Transverse colon (tissue), 4 donors: ENCODE measurements at regions of chr6 and their contacts with region 1.

Region 1: GRCh38 chr6:1609648-1610496 is at the start of gene FOXC1:
- DNase-seq: peak; percentile 79
- H3K4me3 ChIP-seq: peak within 1 kb of the TSS; percentile 33 to 66 (median 48)
- H3K27ac ChIP-seq: peak within 1 kb of the TSS; percentile 62 to 71 (median 69)
- H3K4me1 ChIP-seq: peaks cover 10 to 61% (median 48%) of the 10 kb centered on the region in 4 donors
- H3K27me3 ChIP-seq: peaks cover 92% of the 10 kb centered on the region
- CTCF ChIP-seq: no peak
- EP300 ChIP-seq: no peak
- POLR2A ChIP-seq: no peak
- total RNA-seq, gene FOXC1: 0.75 to 0.96 (median 0.79) TPM

Region 2: GRCh38 chr6:1792989-1793388 is 183.1 kb after region 1 on chr6:
- in situ Hi-C with region 1: no loop called
- intact Hi-C with region 1: no loop called
- DNase-seq: peak; percentile 19
- H3K4me3 ChIP-seq: no peak overlapping the region
- H3K27ac ChIP-seq: no peak overlapping the region
- H3K4me1 ChIP-seq: no peaks in the 10 kb centered on the region
- H3K27me3 ChIP-seq: no peaks in the 10 kb centered on the region
- CTCF ChIP-seq: peak in 3 of 5 experiments; percentile 32 to 35 (median 33)
- EP300 ChIP-seq: no peak
- POLR2A ChIP-seq: no peak

Region 3: DNA sequence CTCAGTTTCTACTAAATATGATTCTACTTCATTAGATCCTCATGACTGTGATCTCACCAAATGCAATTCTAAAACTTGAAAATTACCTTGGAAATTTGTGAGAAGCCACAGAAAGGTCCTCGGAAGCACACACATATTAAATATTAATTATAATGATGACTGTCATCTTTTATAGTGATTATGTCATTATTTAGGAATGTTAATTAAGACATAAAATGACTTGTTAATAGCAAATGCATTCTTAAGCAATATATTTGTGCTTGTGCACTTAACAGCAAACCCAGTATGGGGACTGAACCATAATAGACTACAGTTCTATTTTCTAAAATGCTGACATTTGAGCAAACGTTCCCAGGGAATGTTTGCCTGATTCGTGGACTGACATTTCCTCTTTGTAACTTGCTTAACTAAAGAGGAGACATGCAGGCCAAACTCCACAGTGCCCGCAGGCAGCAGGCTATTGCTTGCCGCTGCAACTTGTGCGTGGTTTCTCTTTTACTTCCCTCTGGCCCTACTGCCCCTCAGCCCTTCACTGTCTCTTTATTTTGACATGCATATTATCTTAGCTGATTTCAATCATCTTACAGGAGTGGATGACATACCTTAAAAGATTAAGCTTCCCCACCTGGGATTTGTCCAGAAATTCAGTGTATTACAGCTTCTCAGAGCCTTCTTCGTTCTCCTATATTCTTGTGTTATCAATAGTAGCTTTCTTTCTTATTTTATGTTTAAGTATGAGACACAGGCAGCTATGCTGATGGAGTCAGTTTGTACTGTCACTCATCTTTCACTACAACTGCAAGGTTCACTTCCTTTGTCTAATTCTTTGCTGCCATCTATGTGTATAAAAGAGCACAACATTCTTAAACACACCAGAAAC is 494.0 kb after region 1 on chr6:
- in situ Hi-C with region 1: no loop called
- intact Hi-C with region 1: loop called (anchors 10 kb)
- DNase-seq: no peak
- H3K4me3 ChIP-seq: no peak overlapping the region
- H3K27ac ChIP-seq: no peak overlapping the region
- H3K4me1 ChIP-seq: no peaks in the 10 kb centered on the region
- H3K27me3 ChIP-seq: no peaks in the 10 kb centered on the region
- CTCF ChIP-seq: peak; percentile 38 to 50 (median 44)
- EP300 ChIP-seq: no peak
- POLR2A ChIP-seq: no peak

Region 4: DNA sequence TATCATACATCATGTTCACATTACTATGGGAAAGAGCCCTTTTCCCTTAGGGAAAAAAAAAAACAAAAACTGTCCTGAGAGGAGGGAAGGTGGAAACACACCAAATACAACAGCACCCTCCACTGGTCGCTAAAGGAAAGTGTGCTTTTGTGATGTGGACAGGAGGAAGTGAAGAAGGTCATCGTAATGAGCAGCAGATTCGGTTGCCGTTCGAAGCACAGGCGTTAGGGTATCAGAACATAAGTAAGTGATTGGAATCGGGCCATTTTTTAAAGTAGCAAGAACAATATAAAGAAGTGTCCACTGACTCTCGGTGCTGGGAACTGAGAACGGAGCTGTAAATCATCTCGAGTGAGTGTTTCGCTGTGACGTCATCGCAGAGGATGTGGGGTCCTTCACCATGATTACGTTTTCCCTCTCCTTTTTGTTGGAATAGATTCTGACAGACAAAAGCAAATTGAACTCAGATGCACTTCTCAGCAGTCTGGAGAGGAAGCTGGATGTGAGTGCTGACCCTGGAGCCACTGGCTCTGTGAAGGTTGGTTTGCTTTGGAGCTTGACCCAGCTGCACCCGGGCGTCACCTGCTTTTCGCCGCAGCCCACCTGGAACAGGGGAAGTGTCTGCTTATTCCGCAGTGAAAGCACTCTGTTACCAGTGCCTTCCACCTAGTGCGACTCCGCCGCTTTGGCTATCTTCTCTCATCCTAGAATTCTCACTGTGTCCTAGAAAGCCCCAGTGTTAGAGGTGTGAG is 839.1 kb after region 1 on chr6:
- in situ Hi-C with region 1: no loop called
- intact Hi-C with region 1: loop called (anchors 10 kb)
- DNase-seq: peak; percentile 43
- H3K4me3 ChIP-seq: peak overlapping the region in 1 of 4 donors; percentile 25
- H3K27ac ChIP-seq: no peak overlapping the region
- H3K4me1 ChIP-seq: peaks cover 0 to 27% (median 11%) of the 10 kb centered on the region in 4 donors
- H3K27me3 ChIP-seq: no peaks in the 10 kb centered on the region
- CTCF ChIP-seq: peak; percentile 64 to 79 (median 66)
- EP300 ChIP-seq: no peak
- POLR2A ChIP-seq: no peak